ENCODE measurements at regions of chr14 and their contacts with region 1.

Region 1: GRCh38 chr14:94026173-94026888 is at the start of gene OTUB2:
- DNase-seq: peak; percentile 97 to 98
- H3K4me3 ChIP-seq: peak within 1 kb of the TSS; percentile 62 to 97 (median 76)
- H3K27ac ChIP-seq: no peak within 1 kb of the TSS
- H3K4me1 ChIP-seq: no peaks in the 10 kb centered on the region
- H3K27me3 ChIP-seq: no peaks in the 10 kb centered on the region
- CTCF ChIP-seq: no peak
- POLR2A ChIP-seq: no peak
- total RNA-seq, gene OTUB2: 0.64 to 1.6 (median 0.73) TPM

Region 2: DNA sequence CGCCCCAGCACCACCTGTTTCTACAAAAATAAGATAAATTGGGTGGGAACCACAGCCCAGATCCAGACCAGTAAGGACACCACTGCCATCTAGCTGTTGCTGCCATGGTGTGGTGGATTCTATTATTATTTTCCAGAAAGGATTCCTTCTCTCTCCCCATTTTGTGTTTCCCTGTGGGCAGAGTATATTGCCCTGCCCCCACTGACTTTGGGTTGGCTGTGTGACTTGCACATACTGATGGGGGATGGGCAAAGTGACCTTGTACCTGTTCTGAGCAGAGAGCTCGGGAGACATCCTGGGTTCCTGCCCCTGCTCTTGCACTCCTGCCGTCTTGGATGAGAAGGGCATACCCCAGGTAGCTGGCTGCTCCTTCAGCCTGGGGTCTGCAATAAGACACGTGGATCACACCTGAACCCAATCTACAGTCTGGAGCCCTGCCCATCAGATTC is 866.0 kb before region 1 on chr14:
- intact Hi-C with region 1: no loop called
- DNase-seq: no peak
- H3K4me3 ChIP-seq: no peak overlapping the region
- H3K27ac ChIP-seq: no peak overlapping the region
- H3K4me1 ChIP-seq: no peaks in the 10 kb centered on the region
- H3K27me3 ChIP-seq: no peaks in the 10 kb centered on the region
- CTCF ChIP-seq: no peak
- POLR2A ChIP-seq: no peak

Region 3: DNA sequence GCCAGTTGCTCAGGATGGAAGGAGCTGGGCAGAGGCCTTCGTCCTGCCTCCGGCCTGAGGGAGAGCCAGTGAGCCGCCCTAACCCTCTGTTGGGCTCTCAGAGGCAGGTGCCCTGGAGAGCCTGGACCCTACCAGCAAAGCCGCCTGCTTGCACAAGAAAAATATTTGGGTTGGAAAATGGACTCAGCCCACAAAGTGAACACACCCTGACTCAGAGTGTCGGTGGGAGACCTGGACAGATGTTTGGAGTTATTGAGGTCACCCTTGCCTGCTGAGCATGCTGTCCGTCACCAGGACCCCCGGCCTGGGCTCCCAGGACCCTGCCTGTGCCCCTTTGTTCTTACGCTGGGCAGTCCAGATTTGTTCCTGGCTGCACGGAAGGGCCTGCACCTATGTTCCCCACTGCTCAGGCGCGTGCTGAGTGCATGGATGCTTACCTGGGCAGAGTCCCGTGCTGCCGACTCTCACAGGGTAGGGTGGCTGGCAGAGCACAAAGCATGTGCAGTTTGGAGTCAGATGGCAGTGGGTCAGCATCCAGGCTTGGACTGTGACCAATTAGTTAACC is 76.7 kb before region 1 on chr14:
- intact Hi-C with region 1: loop called (anchors 2 kb)
- DNase-seq: no peak
- H3K4me3 ChIP-seq: no peak overlapping the region
- H3K27ac ChIP-seq: no peak overlapping the region
- H3K4me1 ChIP-seq: no peaks in the 10 kb centered on the region
- H3K27me3 ChIP-seq: no peaks in the 10 kb centered on the region
- CTCF ChIP-seq: no peak
- POLR2A ChIP-seq: no peak